ENCODE measurements at regions of chr1 and their contacts with region 1.

Region 1: GRCh38 chr1:24964811-24965570 is 34.9 kb upstream of the RUNX3 start:
- DNase-seq: peak; percentile 93
- H3K4me3 Mint-ChIP-seq: peak overlapping the region; percentile 93
- H3K27ac Mint-ChIP-seq: peak overlapping the region; percentile 99
- H3K4me1 Mint-ChIP-seq: peaks cover 78% of the 10 kb centered on the region
- H3K27me3 Mint-ChIP-seq: no peaks in the 10 kb centered on the region

Region 2: GRCh38 chr1:24923485-24924113 is 41.4 kb before region 1 on chr1:
- intact Hi-C with region 1: loop called (anchors 1 kb)
- DNase-seq: no peak
- H3K4me3 Mint-ChIP-seq: peak overlapping the region; percentile 45
- H3K27ac Mint-ChIP-seq: peak overlapping the region; percentile 71
- H3K4me1 Mint-ChIP-seq: peaks cover 78% of the 10 kb centered on the region
- H3K27me3 Mint-ChIP-seq: peaks cover 2% of the 10 kb centered on the region

Region 3: GRCh38 chr1:25003457-25004190 is 38.6 kb after region 1 on chr1:
- intact Hi-C with region 1: loop called (anchors 1 kb)
- DNase-seq: no peak
- H3K4me3 Mint-ChIP-seq: peak overlapping the region; percentile 50
- H3K27ac Mint-ChIP-seq: peak overlapping the region; percentile 89
- H3K4me1 Mint-ChIP-seq: peaks cover 79% of the 10 kb centered on the region
- H3K27me3 Mint-ChIP-seq: no peaks in the 10 kb centered on the region

Region 4: GRCh38 chr1:25031966-25032667 is 67.1 kb after region 1 on chr1:
- intact Hi-C with region 1: loop called (anchors 1 kb)
- DNase-seq: no peak
- H3K4me3 Mint-ChIP-seq: peak overlapping the region; percentile 88
- H3K27ac Mint-ChIP-seq: peak overlapping the region; percentile 99
- H3K4me1 Mint-ChIP-seq: peaks cover 68% of the 10 kb centered on the region
- H3K27me3 Mint-ChIP-seq: peaks cover 2% of the 10 kb centered on the region

Region 5: GRCh38 chr1:25099343-25099951 is 134.5 kb after region 1 on chr1:
- intact Hi-C with region 1: loop called (anchors 1 kb)
- DNase-seq: peak; percentile 37
- H3K4me3 Mint-ChIP-seq: peak overlapping the region; percentile 68
- H3K27ac Mint-ChIP-seq: peak overlapping the region; percentile 88
- H3K4me1 Mint-ChIP-seq: peaks cover 84% of the 10 kb centered on the region
- H3K27me3 Mint-ChIP-seq: peaks cover 2% of the 10 kb centered on the region

Region 6: GRCh38 chr1:25198663-25199252 is 233.8 kb after region 1 on chr1:
- intact Hi-C with region 1: no loop called
- DNase-seq: no peak
- H3K4me3 Mint-ChIP-seq: no peak overlapping the region
- H3K27ac Mint-ChIP-seq: no peak overlapping the region
- H3K4me1 Mint-ChIP-seq: no peaks in the 10 kb centered on the region
- H3K27me3 Mint-ChIP-seq: peaks cover 15% of the 10 kb centered on the region